Ovary (tissue), 10 donors: ENCODE measurements at regions of chr18 and their contacts with region 1.

Region 1: GRCh38 chr18:55264108-55264507 is 304.8 kb upstream of the CCDC68 start:
- DNase-seq: no peak
- H3K4me3 ChIP-seq: no peak overlapping the region
- H3K27ac ChIP-seq: no peak overlapping the region
- H3K4me1 ChIP-seq: peaks cover 7% of the 10 kb centered on the region
- H3K27me3 ChIP-seq: no peaks in the 10 kb centered on the region
- CTCF ChIP-seq: no peak
- EP300 ChIP-seq: no peak
- POLR2A ChIP-seq: no peak

Region 2: GRCh38 chr18:55314615-55315237 is 50.6 kb after region 1 on chr18:
- intact Hi-C with region 1: loop called in 1 of 4 experiments (anchors 5 kb)
- DNase-seq: no peak
- H3K4me3 ChIP-seq: no peak overlapping the region
- H3K27ac ChIP-seq: no peak overlapping the region
- H3K4me1 ChIP-seq: peaks cover 6% of the 10 kb centered on the region
- H3K27me3 ChIP-seq: no peaks in the 10 kb centered on the region
- CTCF ChIP-seq: no peak
- EP300 ChIP-seq: no peak
- POLR2A ChIP-seq: no peak

Region 3: GRCh38 chr18:55927831-55928230 is 663.7 kb after region 1 on chr18:
- intact Hi-C with region 1: no loop called
- DNase-seq: no peak
- H3K4me3 ChIP-seq: no peak overlapping the region
- H3K27ac ChIP-seq: no peak overlapping the region
- H3K4me1 ChIP-seq: no peaks in the 10 kb centered on the region
- H3K27me3 ChIP-seq: no peaks in the 10 kb centered on the region
- CTCF ChIP-seq: no peak
- EP300 ChIP-seq: no peak
- POLR2A ChIP-seq: no peak